PC-3 (cell line): ENCODE measurements at regions of chr4 and their contacts with region 1.

Region 1: GRCh38 chr4:26197018-26197779 is 123.6 kb upstream of the RBPJ start:
- DNase-seq: peak; percentile 96
- ATAC-seq: peak; percentile 94
- H3K4me3 ChIP-seq: no peak overlapping the region
- H3K27ac ChIP-seq: peak overlapping the region; percentile 34
- H3K4me1 ChIP-seq: peaks cover 25% of the 10 kb centered on the region
- H3K27me3 ChIP-seq: no peaks in the 10 kb centered on the region
- CTCF ChIP-seq: no peak

Region 2: GRCh38 chr4:26088433-26088928 is 108.7 kb before region 1 on chr4:
- CTCF ChIA-PET with region 1: no interaction called
- POLR2A ChIA-PET with region 1: no interaction called
- intact Hi-C with region 1: loop called (anchors 1 kb)
- DNase-seq: peak; percentile 93
- ATAC-seq: peak; percentile 81
- H3K4me3 ChIP-seq: no peak overlapping the region
- H3K27ac ChIP-seq: peak overlapping the region; percentile 82
- H3K4me1 ChIP-seq: peaks cover 42% of the 10 kb centered on the region
- H3K27me3 ChIP-seq: no peaks in the 10 kb centered on the region
- CTCF ChIP-seq: no peak

Region 3: GRCh38 chr4:26126143-26126718 is 71.0 kb before region 1 on chr4:
- CTCF ChIA-PET with region 1: interaction called, 4 read pairs
- POLR2A ChIA-PET with region 1: no interaction called
- intact Hi-C with region 1: loop called (anchors 5 kb)
- DNase-seq: no peak
- ATAC-seq: no peak
- H3K4me3 ChIP-seq: no peak overlapping the region
- H3K27ac ChIP-seq: no peak overlapping the region
- H3K4me1 ChIP-seq: peaks cover 35% of the 10 kb centered on the region
- H3K27me3 ChIP-seq: no peaks in the 10 kb centered on the region
- CTCF ChIP-seq: no peak

Region 4: DNA sequence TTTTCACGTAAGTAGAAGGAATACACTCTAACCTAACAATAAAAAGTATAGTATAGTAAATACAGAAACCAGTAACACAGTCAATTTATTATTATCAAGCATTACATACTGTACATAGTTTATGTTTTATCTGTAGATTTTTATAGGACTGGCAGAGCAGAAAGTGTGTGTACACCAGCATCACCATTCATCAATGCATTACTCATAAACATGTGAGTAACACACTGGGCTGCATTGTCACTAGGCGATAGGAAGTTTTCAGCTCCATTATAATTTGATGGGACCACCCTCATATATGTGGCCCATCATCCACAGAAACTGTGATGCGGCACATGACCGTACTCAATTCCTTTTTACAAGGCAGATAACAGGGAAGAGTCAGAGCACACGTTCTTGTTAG is 14.2 kb before region 1 on chr4:
- CTCF ChIA-PET with region 1: no interaction called
- POLR2A ChIA-PET with region 1: no interaction called
- intact Hi-C with region 1: loop called (anchors 2 kb)
- DNase-seq: peak; percentile 76
- ATAC-seq: peak; percentile 90
- H3K4me3 ChIP-seq: no peak overlapping the region
- H3K27ac ChIP-seq: peak overlapping the region; percentile 67
- H3K4me1 ChIP-seq: peaks cover 27% of the 10 kb centered on the region
- H3K27me3 ChIP-seq: no peaks in the 10 kb centered on the region
- CTCF ChIP-seq: no peak

Region 5: GRCh38 chr4:26235500-26235899 is 38.3 kb after region 1 on chr4:
- CTCF ChIA-PET with region 1: no interaction called
- POLR2A ChIA-PET with region 1: no interaction called
- intact Hi-C with region 1: loop called (anchors 1 kb)
- DNase-seq: peak; percentile 72
- ATAC-seq: peak; percentile 29
- H3K4me3 ChIP-seq: no peak overlapping the region
- H3K27ac ChIP-seq: no peak overlapping the region
- H3K4me1 ChIP-seq: peaks cover 50% of the 10 kb centered on the region
- H3K27me3 ChIP-seq: no peaks in the 10 kb centered on the region
- CTCF ChIP-seq: 0 out of 2 replicates have a peak, but pooled peaks have one; percentile 22